ENCODE measurements at regions of chr10 and their contacts with region 1.

Region 1: DNA sequence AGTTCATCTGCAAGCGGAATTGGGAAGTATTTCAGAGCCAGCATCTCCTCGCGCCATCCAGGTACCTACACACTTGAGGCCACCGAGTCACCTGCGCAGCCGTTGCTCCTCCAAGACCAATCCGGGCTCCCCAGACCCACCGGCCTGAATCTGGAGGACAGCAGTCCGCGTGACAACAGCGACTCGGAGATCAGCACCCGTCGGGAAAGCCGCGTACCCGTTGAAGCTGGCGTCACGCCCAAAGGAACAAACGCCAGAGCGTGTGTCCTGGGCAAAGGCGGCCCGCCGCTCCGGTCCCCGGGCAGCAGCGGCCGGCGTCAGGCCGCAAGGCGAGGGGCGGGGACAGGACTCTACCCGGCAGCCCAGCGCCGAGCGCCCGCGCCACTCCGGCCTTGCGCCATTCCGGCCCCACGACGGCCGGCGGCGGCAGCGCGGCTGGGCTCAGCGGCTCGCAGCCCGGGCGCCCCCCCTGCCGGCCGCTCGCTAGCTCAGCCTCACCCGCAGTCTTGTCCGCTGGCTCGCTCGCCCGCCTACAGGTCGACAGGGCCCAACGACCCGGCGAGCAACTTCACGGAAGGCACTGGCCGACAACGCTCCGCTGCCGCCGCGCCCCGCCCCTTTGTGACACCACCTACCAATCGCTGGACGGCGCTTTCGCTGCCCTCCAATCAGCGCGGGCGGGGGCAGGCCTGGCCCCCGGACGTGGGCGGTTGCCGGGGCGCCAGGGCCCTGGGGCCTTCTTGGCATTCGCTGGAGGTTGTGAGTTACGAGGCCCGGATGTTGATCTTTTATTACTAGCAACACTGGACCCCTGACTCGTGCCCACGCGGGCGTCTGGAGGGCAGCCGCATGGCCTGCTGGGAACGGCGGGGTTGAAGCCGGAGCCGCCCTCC is at the start of gene ZFAND4:
- DNase-seq: peak; percentile 87 to 97 (median 95)

Region 2: GRCh38 chr10:45464958-45465567 is 207.4 kb before region 1 on chr10:
- intact Hi-C with region 1: loop called (anchors 2 kb)
- DNase-seq: peak; percentile 71 to 93 (median 86)

Region 3: DNA sequence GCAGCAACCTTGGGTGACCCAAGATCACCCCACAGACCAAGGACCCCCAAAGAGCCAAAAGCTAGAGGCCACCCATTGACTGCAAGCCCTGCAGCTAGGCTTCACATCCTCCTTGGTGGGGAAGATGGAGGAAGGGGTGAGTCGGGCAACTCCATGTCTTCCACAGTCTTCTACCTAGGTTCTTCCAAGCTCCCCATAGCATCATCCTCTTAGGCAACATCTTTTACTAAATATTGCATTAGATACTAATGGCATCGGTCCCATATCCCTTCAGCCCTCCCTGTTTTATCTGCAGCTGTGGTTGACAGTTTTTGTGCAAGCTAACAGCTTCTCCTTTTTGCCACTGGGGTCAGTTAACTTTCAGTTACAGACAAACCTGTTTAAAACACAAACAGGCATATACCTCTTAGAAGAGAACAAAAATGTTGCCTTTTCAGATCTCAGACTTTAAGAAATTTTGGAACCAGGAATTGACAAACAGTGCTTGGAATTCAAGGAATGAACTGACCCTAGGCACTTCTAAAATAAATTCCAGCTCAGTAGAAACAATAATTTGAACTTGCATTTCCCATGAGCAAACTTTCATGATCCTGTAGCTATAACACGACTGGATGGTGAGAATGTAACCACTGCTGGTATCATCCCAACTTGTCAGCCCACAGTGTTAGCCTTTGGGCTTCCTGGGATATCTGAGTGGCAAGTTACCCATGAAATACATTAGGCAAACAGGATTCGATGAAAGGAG is 407.6 kb after region 1 on chr10:
- intact Hi-C with region 1: no loop called
- DNase-seq: peak in 1 of 42 donors; percentile 31